ENCODE measurements at regions of chr16 and their contacts with region 1.

Region 1: DNA sequence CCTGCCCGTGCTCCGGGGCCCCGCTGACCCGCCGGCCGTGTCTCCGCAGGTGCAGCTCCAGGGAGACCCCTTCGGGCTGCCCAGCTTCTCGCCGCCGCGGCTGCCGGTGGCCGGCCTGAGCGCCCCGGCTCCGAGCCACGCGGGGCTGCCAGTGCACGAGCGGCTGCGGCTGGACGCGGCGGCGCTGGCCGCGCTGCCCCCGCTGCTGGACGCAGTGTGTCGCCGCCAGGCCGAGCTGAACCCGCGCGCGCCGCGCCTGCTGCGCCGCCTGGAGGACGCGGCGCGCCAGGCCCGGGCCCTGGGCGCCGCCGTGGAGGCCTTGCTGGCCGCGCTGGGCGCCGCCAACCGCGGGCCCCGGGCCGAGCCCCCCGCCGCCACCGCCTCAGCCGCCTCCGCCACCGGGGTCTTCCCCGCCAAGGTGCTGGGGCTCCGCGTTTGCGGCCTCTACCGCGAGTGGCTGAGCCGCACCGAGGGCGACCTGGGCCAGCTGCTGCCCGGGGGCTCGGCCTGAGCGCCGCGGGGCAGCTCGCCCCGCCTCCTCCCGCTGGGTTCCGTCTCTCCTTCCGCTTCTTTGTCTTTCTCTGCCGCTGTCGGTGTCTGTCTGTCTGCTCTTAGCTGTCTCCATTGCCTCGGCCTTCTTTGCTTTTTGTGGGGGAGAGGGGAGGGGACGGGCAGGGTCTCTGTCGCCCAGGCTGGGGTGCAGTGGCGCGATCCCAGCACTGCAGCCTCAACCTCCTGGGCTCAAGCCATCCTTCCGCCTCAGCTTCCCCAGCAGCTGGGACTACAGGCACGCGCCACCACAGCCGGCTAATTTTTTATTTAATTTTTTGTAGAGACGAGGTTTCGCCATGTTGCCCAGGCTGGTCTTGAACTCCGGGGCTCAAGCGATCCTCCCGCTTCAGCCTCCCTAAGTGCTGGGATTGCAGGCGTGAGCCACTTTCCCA is 5.9 kb downstream of the CTF1 start:
- DNase-seq: no peak
- ATAC-seq: peak; percentile 88
- H3K4me3 ChIP-seq: peak overlapping the region; percentile 37 to 60
- H3K27ac ChIP-seq: peak overlapping the region; percentile 89
- H3K4me1 ChIP-seq: peaks cover 16 to 37% of the 10 kb centered on the region in 2 experiments; a peak in 3 of 4 replicates
- H3K27me3 ChIP-seq: no peaks in the 10 kb centered on the region
- CTCF ChIP-seq: 0 out of 6 replicates have a peak, but pooled peaks of 1 of the 3 experiments have one; percentile 1
- POLR2A ChIP-seq: no peak
- RAD21 ChIP-seq: no peak

Region 2: DNA sequence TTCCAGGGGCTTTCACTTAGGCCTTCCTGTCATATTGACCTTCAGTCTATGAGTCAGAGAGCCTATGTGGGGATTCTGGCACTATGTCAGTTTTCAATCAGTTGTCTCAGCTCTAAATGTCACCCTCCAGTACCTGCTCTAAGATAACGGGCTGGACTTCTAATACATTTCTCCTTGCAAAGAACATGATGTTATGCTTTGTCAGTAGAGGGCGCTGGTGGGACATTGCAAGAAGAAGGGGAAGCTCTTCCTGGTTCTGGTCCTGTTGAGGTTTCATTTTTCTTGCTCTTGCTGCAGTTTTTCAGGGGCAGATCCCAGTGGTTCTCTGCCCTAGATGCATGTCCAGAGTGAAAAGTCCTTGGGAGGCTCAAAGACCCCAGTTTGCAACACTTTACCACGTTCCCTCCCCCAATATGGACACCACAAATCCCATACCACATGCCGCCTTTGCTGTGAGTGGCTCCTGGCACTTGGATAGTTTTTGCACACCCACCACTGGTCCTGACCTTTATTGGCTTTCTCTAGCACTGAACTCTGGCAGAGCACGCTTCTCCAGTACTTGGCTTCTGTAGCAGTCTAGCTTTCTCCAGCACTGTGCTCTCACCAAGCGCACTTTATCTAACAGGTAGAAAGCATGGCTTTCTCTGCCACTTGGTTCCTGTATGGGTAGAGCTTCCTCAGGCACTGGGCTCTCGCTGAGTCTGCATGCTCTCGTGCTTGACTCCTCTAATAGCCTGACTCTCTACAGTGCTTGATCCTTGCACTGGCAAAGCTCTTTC is 57.4 kb before region 1 on chr16:
- CTCF ChIA-PET with region 1: interaction called, 13 read pairs
- POLR2A ChIA-PET with region 1: no interaction called
- RAD21 ChIA-PET with region 1: interaction called in 1 of 2 experiments, 5 read pairs
- intact Hi-C with region 1: loop called (anchors 5 kb)
- DNase-seq: peak; percentile 71
- ATAC-seq: peak; percentile 93
- H3K4me3 ChIP-seq: no peak overlapping the region
- H3K27ac ChIP-seq: no peak overlapping the region
- H3K4me1 ChIP-seq: peaks cover 0 to 7% of the 10 kb centered on the region in 2 experiments; a peak in 1 of 4 replicates
- H3K27me3 ChIP-seq: no peaks in the 10 kb centered on the region
- CTCF ChIP-seq: peak; percentile 84 to 93 (median 90)
- POLR2A ChIP-seq: no peak
- RAD21 ChIP-seq: peak; percentile 89

Region 3: GRCh38 chr16:31179747-31180459 is 277.6 kb after region 1 on chr16 and contains the start of gene FUS:
- CTCF ChIA-PET with region 1: no interaction called
- POLR2A ChIA-PET with region 1: no interaction called
- RAD21 ChIA-PET with region 1: no interaction called
- intact Hi-C with region 1: no loop called
- DNase-seq: peak; percentile 76
- ATAC-seq: peak; percentile 71
- H3K4me3 ChIP-seq: peak within 1 kb of the TSS; percentile 90 to 93
- H3K27ac ChIP-seq: peak within 1 kb of the TSS; percentile 92
- H3K4me1 ChIP-seq: peaks cover 10 to 26% of the 10 kb centered on the region in 2 experiments
- H3K27me3 ChIP-seq: no peaks in the 10 kb centered on the region
- CTCF ChIP-seq: no peak
- POLR2A ChIP-seq: peak; percentile 100
- RAD21 ChIP-seq: 0 out of 2 replicates have a peak, but pooled peaks have one; percentile 5
- total RNA-seq, gene FUS: 522 TPM

Region 4: GRCh38 chr16:31202414-31203375 is 300.4 kb after region 1 on chr16 and contains the start of gene PYCARD:
- CTCF ChIA-PET with region 1: no interaction called
- POLR2A ChIA-PET with region 1: no interaction called
- RAD21 ChIA-PET with region 1: no interaction called
- intact Hi-C with region 1: no loop called
- DNase-seq: no peak
- ATAC-seq: no peak
- H3K4me3 ChIP-seq: no peak within 1 kb of the TSS
- H3K27ac ChIP-seq: 0 out of 2 replicates have a peak within 1 kb of the TSS, but pooled peaks have one; percentile 21
- H3K4me1 ChIP-seq: peaks cover 0 to 6% of the 10 kb centered on the region in 2 experiments; a peak in 1 of 4 replicates
- H3K27me3 ChIP-seq: no peaks in the 10 kb centered on the region
- CTCF ChIP-seq: no peak
- POLR2A ChIP-seq: no peak
- RAD21 ChIP-seq: no peak
- total RNA-seq, gene PYCARD: not detected